ENCODE measurements at regions of chr15 and their contacts with region 1.

Region 1: GRCh38 chr15:81410318-81410753 is 36.3 kb upstream of the TMC3 start:
- DNase-seq: peak; percentile 37
- H3K4me3 ChIP-seq: no peak overlapping the region
- H3K27ac ChIP-seq: no peak overlapping the region
- H3K27me3 ChIP-seq: peaks cover 17% of the 10 kb centered on the region
- CTCF ChIP-seq: peak; percentile 57

Region 2: DNA sequence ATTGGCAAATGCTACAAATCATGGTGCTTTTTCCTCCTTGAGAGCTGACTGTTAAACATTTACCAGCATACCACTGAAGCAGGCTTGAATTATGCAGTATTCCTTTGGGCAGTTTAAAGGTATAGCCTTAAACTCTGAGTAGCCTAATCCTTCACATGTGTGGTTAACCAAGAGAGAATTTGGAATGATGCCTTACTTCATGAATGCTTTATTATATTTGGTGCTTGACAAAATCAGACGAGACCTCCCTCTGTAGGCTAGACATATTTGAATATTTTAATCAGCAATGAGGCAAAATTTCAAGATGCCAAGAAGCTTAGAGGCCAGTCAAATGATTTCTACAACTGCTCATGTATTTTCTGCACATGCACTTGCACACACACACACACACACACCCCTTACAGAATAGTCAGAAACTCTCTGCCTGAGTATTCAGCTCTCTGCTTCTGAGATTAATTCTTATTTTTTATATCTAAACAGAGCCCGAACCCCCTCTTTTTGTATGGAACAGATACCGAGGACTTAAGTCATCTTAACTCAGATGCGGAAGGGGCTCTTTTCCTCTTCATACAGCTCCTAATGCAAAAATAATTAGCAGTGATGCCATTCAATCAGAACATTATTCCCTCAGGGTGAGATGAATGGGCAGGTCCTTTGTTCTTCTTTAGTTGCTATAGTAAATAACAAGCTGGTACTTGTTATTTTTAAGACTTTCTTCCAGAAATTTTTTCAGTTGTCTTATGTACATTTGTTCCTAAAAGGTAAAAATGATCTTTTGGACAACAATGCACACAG is 159.1 kb after region 1 on chr15:
- CTCF ChIA-PET with region 1: no interaction called
- POLR2A ChIA-PET with region 1: no interaction called
- DNase-seq: no peak
- H3K4me3 ChIP-seq: no peak overlapping the region
- H3K27ac ChIP-seq: no peak overlapping the region
- H3K27me3 ChIP-seq: no peaks in the 10 kb centered on the region
- CTCF ChIP-seq: no peak

Region 3: DNA sequence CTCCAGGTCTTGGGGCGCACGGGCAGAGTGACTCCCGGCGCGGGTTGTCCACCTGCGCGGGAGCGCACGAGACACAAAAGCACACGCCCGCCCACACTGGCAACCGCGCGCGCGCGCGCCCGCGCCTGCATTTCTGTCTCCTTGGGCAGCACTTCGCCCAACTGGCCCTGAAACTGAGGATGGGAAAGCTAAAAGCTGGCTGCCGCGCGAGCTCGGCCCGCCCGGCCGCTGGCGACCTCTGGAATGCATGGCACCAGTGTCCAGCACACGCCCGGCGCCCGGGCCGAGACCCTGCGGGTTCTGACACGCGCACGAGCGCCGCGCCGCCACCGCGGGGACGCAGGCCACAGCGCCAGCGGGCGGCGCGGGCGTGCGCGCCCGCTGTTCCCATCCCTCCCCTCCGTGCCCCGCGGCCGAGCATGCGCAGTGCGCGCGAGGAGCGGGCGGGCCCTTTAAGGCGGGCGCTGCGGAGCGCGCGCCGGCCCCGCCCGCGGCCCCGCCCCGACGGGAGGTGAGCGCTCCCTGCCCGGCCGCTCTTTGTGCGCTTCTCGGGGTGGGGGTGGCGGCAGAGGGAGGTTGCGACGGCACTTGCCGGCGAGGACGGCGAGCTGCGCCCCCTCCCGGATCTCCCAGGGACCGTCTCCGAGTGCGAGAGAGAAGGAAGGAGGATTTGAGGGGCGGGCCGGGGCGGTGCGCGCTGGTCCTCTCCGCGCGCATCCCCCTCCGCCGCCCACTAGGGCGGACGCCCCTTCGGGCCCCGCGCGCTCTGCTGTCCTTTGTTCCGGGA is 636.5 kb after region 1 on chr15:
- CTCF ChIA-PET with region 1: interaction called, 13 read pairs
- POLR2A ChIA-PET with region 1: no interaction called
- DNase-seq: peak; percentile 86
- H3K4me3 ChIP-seq: peak overlapping the region; percentile 89
- H3K27ac ChIP-seq: peak overlapping the region; percentile 98
- H3K27me3 ChIP-seq: no peaks in the 10 kb centered on the region
- CTCF ChIP-seq: peak; percentile 77

Region 4: GRCh38 chr15:82197733-82198594 is 787.6 kb after region 1 on chr15:
- CTCF ChIA-PET with region 1: interaction called, 16 read pairs
- POLR2A ChIA-PET with region 1: no interaction called
- DNase-seq: peak; percentile 50
- H3K4me3 ChIP-seq: no peak overlapping the region
- H3K27ac ChIP-seq: no peak overlapping the region
- H3K27me3 ChIP-seq: no peaks in the 10 kb centered on the region
- CTCF ChIP-seq: peak; percentile 79

Measured in AG04450 (cell line).